ENCODE measurements at regions of chr12 and their contacts with region 1.

Region 1: GRCh38 chr12:6607751-6608591 is 792 bp upstream of the CHD4 start:
- DNase-seq: no peak
- ATAC-seq: peak; percentile 31
- H3K4me3 Mint-ChIP-seq: no peak overlapping the region
- H3K27ac Mint-ChIP-seq: no peak overlapping the region
- H3K4me1 Mint-ChIP-seq: peaks cover 64% of the 10 kb centered on the region
- H3K27me3 Mint-ChIP-seq: no peaks in the 10 kb centered on the region
- CTCF ChIP-seq: no peak

Region 2: DNA sequence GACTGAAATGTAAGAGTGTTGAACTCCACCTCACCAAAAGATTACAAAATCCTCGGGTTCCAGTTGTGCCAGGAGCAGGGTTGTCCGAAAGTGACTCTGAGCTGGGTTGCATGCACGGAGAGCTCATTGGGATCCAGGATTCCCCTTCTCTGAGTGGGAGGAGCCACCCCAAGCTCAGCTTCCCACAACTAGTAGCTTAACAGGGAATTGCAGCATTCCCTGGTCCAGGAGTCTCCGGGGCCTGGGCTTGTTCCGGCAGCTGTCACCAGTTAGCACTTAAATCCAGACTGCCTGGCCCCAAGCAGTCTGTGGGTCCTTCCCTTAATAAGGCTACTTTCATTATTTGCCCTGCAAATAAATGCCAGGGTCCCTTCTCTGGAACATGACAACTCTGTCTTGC is 357.6 kb before region 1 on chr12:
- CTCF ChIA-PET with region 1: no interaction called
- POLR2A ChIA-PET with region 1: no interaction called
- intact Hi-C with region 1: no loop called
- DNase-seq: no peak
- ATAC-seq: no peak
- H3K4me3 Mint-ChIP-seq: no peak overlapping the region
- H3K27ac Mint-ChIP-seq: no peak overlapping the region
- H3K4me1 Mint-ChIP-seq: no peaks in the 10 kb centered on the region
- H3K27me3 Mint-ChIP-seq: peaks cover 12% of the 10 kb centered on the region
- CTCF ChIP-seq: no peak

Region 3: GRCh38 chr12:6554168-6555017 is 53.6 kb before region 1 on chr12:
- CTCF ChIA-PET with region 1: interaction called, 3 read pairs
- POLR2A ChIA-PET with region 1: interaction called, 4 read pairs
- intact Hi-C with region 1: loop called (anchors 1 kb)
- DNase-seq: peak; percentile 61
- ATAC-seq: peak; percentile 77
- H3K4me3 Mint-ChIP-seq: peak overlapping the region; percentile 84
- H3K27ac Mint-ChIP-seq: peak overlapping the region; percentile 70
- H3K4me1 Mint-ChIP-seq: peaks cover 45% of the 10 kb centered on the region
- H3K27me3 Mint-ChIP-seq: no peaks in the 10 kb centered on the region
- CTCF ChIP-seq: peak; percentile 43

Region 4: GRCh38 chr12:6582196-6582595 is 25.8 kb before region 1 on chr12:
- CTCF ChIA-PET with region 1: no interaction called
- POLR2A ChIA-PET with region 1: interaction called, 9 read pairs
- intact Hi-C with region 1: loop called (anchors 2 kb)
- DNase-seq: no peak
- ATAC-seq: no peak
- H3K4me3 Mint-ChIP-seq: no peak overlapping the region
- H3K27ac Mint-ChIP-seq: no peak overlapping the region
- H3K4me1 Mint-ChIP-seq: no peaks in the 10 kb centered on the region
- H3K27me3 Mint-ChIP-seq: no peaks in the 10 kb centered on the region
- CTCF ChIP-seq: no peak

Region 5: DNA sequence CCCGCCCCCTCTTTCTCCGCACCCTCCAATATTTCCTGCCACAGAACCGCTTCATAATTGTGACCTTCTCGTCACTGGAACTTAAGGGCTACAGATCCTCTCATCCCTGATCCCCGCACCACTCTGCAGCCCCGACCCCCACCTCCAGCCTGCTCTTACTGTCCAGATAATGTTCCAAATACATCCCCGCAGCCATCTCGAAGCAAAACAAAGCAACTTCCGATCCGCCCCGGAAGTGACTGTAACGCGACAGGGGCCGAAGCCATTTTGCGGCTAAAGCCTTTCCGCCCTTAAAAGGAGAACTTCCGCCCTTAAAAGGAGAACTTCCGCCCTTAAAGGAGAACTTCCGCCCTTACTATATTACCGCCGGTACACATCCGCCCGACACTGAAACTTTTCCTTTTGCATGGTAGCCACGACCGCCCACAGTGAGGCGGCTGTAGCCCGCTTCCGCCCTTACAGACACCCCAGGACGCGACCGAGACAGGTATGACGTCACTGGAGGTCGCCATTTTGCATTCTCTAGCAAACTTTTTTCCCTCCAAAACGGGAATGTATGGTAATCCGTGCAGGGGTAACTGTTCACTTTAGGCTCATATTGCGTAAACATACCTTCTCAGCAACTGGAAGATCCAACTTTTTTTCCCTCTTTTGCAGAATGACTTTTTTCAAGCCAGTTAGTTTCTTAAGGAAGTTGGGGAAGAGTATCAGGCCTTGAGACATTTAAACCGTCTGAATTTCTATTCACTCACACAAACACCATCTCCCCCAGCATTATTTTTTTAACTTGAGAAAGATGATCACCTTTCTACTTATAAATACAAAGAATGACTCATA is 55.2 kb after region 1 on chr12 and contains the start of gene ING4:
- CTCF ChIA-PET with region 1: interaction called, 3 read pairs
- POLR2A ChIA-PET with region 1: interaction called, 8 read pairs
- intact Hi-C with region 1: loop called (anchors 1 kb)
- DNase-seq: peak; percentile 80
- ATAC-seq: peak; percentile 97
- H3K4me3 Mint-ChIP-seq: peak within 1 kb of the TSS; percentile 97
- H3K27ac Mint-ChIP-seq: peak within 1 kb of the TSS; percentile 95
- H3K4me1 Mint-ChIP-seq: peaks cover 27% of the 10 kb centered on the region
- H3K27me3 Mint-ChIP-seq: no peaks in the 10 kb centered on the region
- CTCF ChIP-seq: no peak
- total RNA-seq, gene ING4: 31.6 and 39.2 TPM in 2 replicates

Region 6: GRCh38 chr12:6873094-6874014 is 265.4 kb after region 1 on chr12 and contains the start of gene SPSB2:
- CTCF ChIA-PET with region 1: no interaction called
- POLR2A ChIA-PET with region 1: interaction called, 3 read pairs
- intact Hi-C with region 1: loop called (anchors 1 kb)
- DNase-seq: peak; percentile 100
- ATAC-seq: peak; percentile 88
- H3K4me3 Mint-ChIP-seq: peak within 1 kb of the TSS; percentile 88
- H3K27ac Mint-ChIP-seq: peak within 1 kb of the TSS; percentile 85
- H3K4me1 Mint-ChIP-seq: peaks cover 37% of the 10 kb centered on the region
- H3K27me3 Mint-ChIP-seq: no peaks in the 10 kb centered on the region
- CTCF ChIP-seq: no peak
- total RNA-seq, gene SPSB2: 14.4 and 16.2 TPM in 2 replicates

Region 7: GRCh38 chr12:7039403-7039802 is 431.4 kb after region 1 on chr12:
- CTCF ChIA-PET with region 1: no interaction called
- POLR2A ChIA-PET with region 1: no interaction called
- intact Hi-C with region 1: no loop called
- DNase-seq: no peak
- ATAC-seq: no peak
- H3K4me3 Mint-ChIP-seq: no peak overlapping the region
- H3K27ac Mint-ChIP-seq: no peak overlapping the region
- H3K4me1 Mint-ChIP-seq: no peaks in the 10 kb centered on the region
- H3K27me3 Mint-ChIP-seq: no peaks in the 10 kb centered on the region
- CTCF ChIP-seq: no peak